ENCODE measurements at regions of chr17 and their contacts with region 1.

Region 1: DNA sequence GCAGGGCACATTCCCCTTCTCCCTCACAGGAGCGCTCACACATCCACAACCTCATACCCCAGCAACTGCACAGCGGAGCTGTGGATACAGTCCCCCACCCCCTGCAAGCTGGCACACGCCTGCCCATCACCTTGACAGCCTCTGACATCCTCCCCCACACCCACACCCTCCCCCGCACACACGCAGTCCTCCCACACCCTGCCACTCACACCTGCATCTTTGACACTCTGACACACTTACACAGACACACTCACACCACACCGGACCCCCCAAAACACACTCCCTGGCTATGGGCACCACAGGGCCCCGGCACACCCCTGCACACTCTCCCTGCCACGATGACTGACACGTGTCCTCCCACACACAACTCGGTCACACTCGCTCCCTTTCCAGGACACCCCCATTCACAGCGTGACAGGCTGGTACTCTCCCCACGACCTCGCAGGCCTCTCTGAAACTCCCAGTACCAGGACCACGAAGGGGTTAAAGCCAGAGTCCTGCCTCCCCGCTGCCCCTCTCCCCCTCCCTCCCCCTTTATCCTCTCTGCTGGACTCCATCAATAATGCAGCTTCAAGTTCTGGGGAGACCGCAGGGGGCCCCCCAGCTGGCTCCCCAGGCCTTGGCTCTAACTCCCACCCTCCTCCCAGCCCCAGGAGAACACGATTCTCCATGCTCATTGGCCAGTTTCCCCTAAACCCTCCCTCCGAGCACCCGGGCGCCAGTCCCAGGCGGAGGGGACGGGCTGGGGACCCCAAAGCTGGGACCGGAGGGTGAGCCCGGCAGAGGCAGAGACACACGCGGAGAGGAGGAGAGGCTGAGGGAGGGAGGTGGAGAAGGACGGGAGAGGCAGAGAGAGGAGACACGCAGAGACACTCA is at the start of gene PPP1R1B:
- DNase-seq: peak in 1 of 2 donors; percentile 65
- H3K4me3 ChIP-seq: peak within 1 kb of the TSS; percentile 34 to 52 (median 36)
- H3K27ac ChIP-seq: peak within 1 kb of the TSS in 3 of 5 donors; percentile 7 to 69 (median 56)
- H3K4me1 ChIP-seq: peaks cover 11 to 50% (median 45%) of the 10 kb centered on the region in 4 donors
- H3K27me3 ChIP-seq: peaks cover 10 to 83% (median 39%) of the 10 kb centered on the region in 3 donors
- CTCF ChIP-seq: no peak
- EP300 ChIP-seq: no peak
- POLR2A ChIP-seq: no peak
- total RNA-seq, gene PPP1R1B: 0.58 to 279 (median 11.0) TPM

Region 2: DNA sequence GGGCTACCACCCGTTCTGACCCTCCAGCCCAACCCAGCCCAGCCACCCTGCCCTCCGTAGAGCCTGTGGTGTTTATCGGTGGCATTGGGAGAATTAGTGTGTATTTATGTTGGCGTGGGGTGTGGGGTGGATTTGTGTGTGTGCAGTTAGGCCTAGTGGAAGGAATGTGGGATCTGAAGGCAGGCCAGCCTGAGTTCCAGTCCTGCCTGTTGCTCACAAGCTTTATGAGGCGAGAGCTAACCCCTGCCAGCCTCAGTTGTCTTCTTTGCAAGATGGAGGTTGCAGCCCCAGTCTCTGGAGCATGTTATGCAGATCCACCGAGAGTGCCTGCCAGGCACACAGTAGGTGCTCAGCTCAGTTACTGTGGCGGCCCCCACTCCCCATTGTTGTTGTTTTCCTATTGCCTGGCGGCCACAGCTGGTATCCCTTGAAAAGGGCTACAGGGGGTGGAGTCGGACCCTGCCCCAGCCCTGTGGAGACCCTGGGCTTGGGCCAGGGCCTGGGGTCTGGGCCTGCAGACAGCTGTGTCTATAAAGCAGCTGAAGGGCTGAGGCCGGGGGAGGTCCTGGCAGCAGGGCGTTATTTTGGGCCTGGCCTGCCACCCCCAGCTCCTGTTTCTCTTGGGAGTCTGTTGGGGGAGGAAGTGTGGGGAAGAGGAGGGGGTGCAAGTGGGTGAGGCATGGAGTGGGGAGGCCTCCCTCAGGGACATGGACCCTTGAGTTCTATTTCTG is 78.6 kb after region 1 on chr17:
- intact Hi-C with region 1: no loop called
- DNase-seq: peak; percentile 56 to 77
- H3K4me3 ChIP-seq: peak overlapping the region in 1 of 4 donors; percentile 26
- H3K27ac ChIP-seq: peak overlapping the region; percentile 85 to 95 (median 92)
- H3K4me1 ChIP-seq: peaks cover 58 to 85% (median 72%) of the 10 kb centered on the region in 4 donors
- H3K27me3 ChIP-seq: peaks cover 0 to 15% (median 5%) of the 10 kb centered on the region in 3 donors
- CTCF ChIP-seq: peak in 5 of 7 experiments; percentile 7 to 71 (median 43)
- EP300 ChIP-seq: no peak
- POLR2A ChIP-seq: no peak

Region 3: GRCh38 chr17:39754161-39754951 is 127.9 kb after region 1 on chr17:
- intact Hi-C with region 1: loop called (anchors 5 kb)
- DNase-seq: peak; percentile 96 to 97
- H3K4me3 ChIP-seq: peak overlapping the region; percentile 64 to 72 (median 66)
- H3K27ac ChIP-seq: peak overlapping the region; percentile 91 to 96 (median 96)
- H3K4me1 ChIP-seq: peaks cover 6 to 36% (median 24%) of the 10 kb centered on the region in 4 donors
- H3K27me3 ChIP-seq: no peaks in the 10 kb centered on the region
- CTCF ChIP-seq: peak in 6 of 7 experiments; percentile 66 to 99 (median 96)
- EP300 ChIP-seq: no peak
- POLR2A ChIP-seq: peak in 1 of 4 donors; percentile 45

Region 4: DNA sequence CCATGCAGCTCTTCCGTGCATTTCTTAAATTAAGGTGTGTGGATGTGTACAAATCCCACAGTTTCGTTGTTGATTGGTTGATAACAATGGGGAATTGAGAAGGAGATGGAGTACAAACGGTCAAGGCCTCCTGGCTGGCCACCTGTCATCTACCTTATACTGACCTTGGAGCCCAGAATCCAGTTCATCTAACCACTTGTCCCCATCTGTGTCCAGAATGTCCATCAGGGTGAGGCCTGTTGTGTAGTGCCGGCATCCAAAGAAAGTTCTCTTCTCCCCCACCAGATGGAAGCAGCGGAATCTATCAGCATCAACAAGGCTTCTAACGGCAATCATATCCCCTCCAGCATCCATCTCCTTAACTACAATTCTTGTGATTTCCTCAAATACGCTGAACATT is 290.5 kb after region 1 on chr17:
- intact Hi-C with region 1: no loop called
- DNase-seq: no peak
- H3K4me3 ChIP-seq: peak overlapping the region in 1 of 4 donors; percentile 40
- H3K27ac ChIP-seq: peak overlapping the region in 3 of 5 donors; percentile 28 to 76 (median 42)
- H3K4me1 ChIP-seq: peaks cover 0 to 12% (median 0%) of the 10 kb centered on the region in 4 donors
- H3K27me3 ChIP-seq: no peaks in the 10 kb centered on the region
- CTCF ChIP-seq: no peak
- EP300 ChIP-seq: no peak
- POLR2A ChIP-seq: no peak